ENCODE measurements at regions of chr1 and their contacts with region 1.

Region 1: GRCh38 chr1:100459358-100460114 is 78.4 kb upstream of the GPR88 start:
- DNase-seq: peak; percentile 82
- ATAC-seq: peak; percentile 92
- H3K4me3 ChIP-seq: no peak overlapping the region
- H3K27ac ChIP-seq: no peak overlapping the region
- H3K4me1 ChIP-seq: no peaks in the 10 kb centered on the region; the same call in 1 of the 2 replicates
- H3K27me3 ChIP-seq: no peaks in the 10 kb centered on the region
- CTCF ChIP-seq: peak; percentile 90
- POLR2A ChIP-seq: 0 out of 2 replicates have a peak, but pooled peaks have one; percentile 28
- RAD21 ChIP-seq: peak; percentile 94

Region 2: GRCh38 chr1:100037927-100038659 is 421.4 kb before region 1 on chr1:
- CTCF ChIA-PET with region 1: interaction called, 3 read pairs
- POLR2A ChIA-PET with region 1: no interaction called
- dilution Hi-C with region 1: no loop called
- in situ Hi-C with region 1: no loop called
- intact Hi-C with region 1: loop called (anchors 2 kb)
- DNase-seq: peak; percentile 83
- ATAC-seq: peak; percentile 95
- H3K4me3 ChIP-seq: peak overlapping the region; percentile 99
- H3K27ac ChIP-seq: peak overlapping the region; percentile 99
- H3K4me1 ChIP-seq: no peaks in the 10 kb centered on the region
- H3K27me3 ChIP-seq: no peaks in the 10 kb centered on the region
- CTCF ChIP-seq: no peak
- POLR2A ChIP-seq: peak; percentile 95
- RAD21 ChIP-seq: no peak

Region 3: GRCh38 chr1:100265931-100266740 is 193.4 kb before region 1 on chr1 and contains the start of gene RTCA:
- CTCF ChIA-PET with region 1: no interaction called
- POLR2A ChIA-PET with region 1: no interaction called
- dilution Hi-C with region 1: no loop called
- in situ Hi-C with region 1: no loop called
- intact Hi-C with region 1: loop called (anchors 5 kb)
- DNase-seq: peak; percentile 93
- ATAC-seq: peak; percentile 99
- H3K4me3 ChIP-seq: peak within 1 kb of the TSS; percentile 66
- H3K27ac ChIP-seq: peak within 1 kb of the TSS; percentile 78
- H3K4me1 ChIP-seq: peaks cover 2% of the 10 kb centered on the region; the same call in 1 of the 2 replicates
- H3K27me3 ChIP-seq: no peaks in the 10 kb centered on the region
- CTCF ChIP-seq: no peak
- POLR2A ChIP-seq: no peak
- RAD21 ChIP-seq: no peak
- total RNA-seq, gene RTCA: 29.6 and 45.3 TPM in 2 replicates

Region 4: GRCh38 chr1:100351095-100351891 is 108.2 kb before region 1 on chr1:
- CTCF ChIA-PET with region 1: interaction called, 6 read pairs
- POLR2A ChIA-PET with region 1: no interaction called
- dilution Hi-C with region 1: no loop called
- in situ Hi-C with region 1: no loop called
- intact Hi-C with region 1: loop called (anchors 5 kb)
- DNase-seq: peak; percentile 84
- ATAC-seq: peak; percentile 79
- H3K4me3 ChIP-seq: peak overlapping the region; percentile 86
- H3K27ac ChIP-seq: peak overlapping the region; percentile 69
- H3K4me1 ChIP-seq: peaks cover 4% of the 10 kb centered on the region; the same call in 1 of the 2 replicates
- H3K27me3 ChIP-seq: no peaks in the 10 kb centered on the region
- CTCF ChIP-seq: no peak
- POLR2A ChIP-seq: peak; percentile 20; the same call in 1 of the 2 replicates
- RAD21 ChIP-seq: no peak

Region 5: GRCh38 chr1:100387657-100388350 is 71.7 kb before region 1 on chr1:
- CTCF ChIA-PET with region 1: no interaction called
- POLR2A ChIA-PET with region 1: no interaction called
- dilution Hi-C with region 1: no loop called
- in situ Hi-C with region 1: no loop called
- intact Hi-C with region 1: no loop called
- DNase-seq: peak; percentile 64
- ATAC-seq: peak; percentile 95
- H3K4me3 ChIP-seq: no peak overlapping the region
- H3K27ac ChIP-seq: peak overlapping the region; percentile 57; the same call in 1 of the 2 replicates
- H3K4me1 ChIP-seq: peaks cover 1% of the 10 kb centered on the region
- H3K27me3 ChIP-seq: no peaks in the 10 kb centered on the region
- CTCF ChIP-seq: no peak
- POLR2A ChIP-seq: no peak
- RAD21 ChIP-seq: no peak

Region 6: GRCh38 chr1:100575406-100575805 is 115.9 kb after region 1 on chr1:
- CTCF ChIA-PET with region 1: no interaction called
- POLR2A ChIA-PET with region 1: no interaction called
- dilution Hi-C with region 1: no loop called
- in situ Hi-C with region 1: no loop called
- intact Hi-C with region 1: no loop called
- DNase-seq: no peak
- ATAC-seq: no peak
- H3K4me3 ChIP-seq: no peak overlapping the region
- H3K27ac ChIP-seq: no peak overlapping the region
- H3K4me1 ChIP-seq: no peaks in the 10 kb centered on the region; the same call in 1 of the 2 replicates
- H3K27me3 ChIP-seq: no peaks in the 10 kb centered on the region
- CTCF ChIP-seq: no peak
- POLR2A ChIP-seq: no peak
- RAD21 ChIP-seq: no peak

Region 7: GRCh38 chr1:100721536-100722207 is 262.1 kb after region 1 on chr1:
- CTCF ChIA-PET with region 1: interaction called, 3 read pairs
- POLR2A ChIA-PET with region 1: no interaction called
- dilution Hi-C with region 1: no loop called
- in situ Hi-C with region 1: no loop called
- intact Hi-C with region 1: loop called (anchors 1 kb)
- DNase-seq: peak; percentile 96
- ATAC-seq: peak; percentile 78
- H3K4me3 ChIP-seq: peak overlapping the region; percentile 51
- H3K27ac ChIP-seq: peak overlapping the region; percentile 96; the same call in 1 of the 2 replicates
- H3K4me1 ChIP-seq: peaks cover 4% of the 10 kb centered on the region
- H3K27me3 ChIP-seq: no peaks in the 10 kb centered on the region
- CTCF ChIP-seq: no peak
- POLR2A ChIP-seq: no peak
- RAD21 ChIP-seq: peak; percentile 27; the same call in 1 of the 2 replicates

Region 8: GRCh38 chr1:100895540-100896483 is 436.3 kb after region 1 on chr1 and contains the start of gene SLC30A7:
- CTCF ChIA-PET with region 1: no interaction called
- POLR2A ChIA-PET with region 1: no interaction called
- dilution Hi-C with region 1: loop called (anchors 25 kb)
- in situ Hi-C with region 1: no loop called
- intact Hi-C with region 1: no loop called
- DNase-seq: peak; percentile 86
- ATAC-seq: peak; percentile 92
- H3K4me3 ChIP-seq: peak within 1 kb of the TSS; percentile 69
- H3K27ac ChIP-seq: peak within 1 kb of the TSS; percentile 86
- H3K4me1 ChIP-seq: no peaks in the 10 kb centered on the region; the same call in 1 of the 2 replicates
- H3K27me3 ChIP-seq: no peaks in the 10 kb centered on the region
- CTCF ChIP-seq: no peak
- POLR2A ChIP-seq: peak; percentile 88
- RAD21 ChIP-seq: no peak
- total RNA-seq, gene SLC30A7: 60.2 and 87.2 TPM in 2 replicates